ENCODE measurements at regions of chr17 and their contacts with region 1.

Region 1: DNA sequence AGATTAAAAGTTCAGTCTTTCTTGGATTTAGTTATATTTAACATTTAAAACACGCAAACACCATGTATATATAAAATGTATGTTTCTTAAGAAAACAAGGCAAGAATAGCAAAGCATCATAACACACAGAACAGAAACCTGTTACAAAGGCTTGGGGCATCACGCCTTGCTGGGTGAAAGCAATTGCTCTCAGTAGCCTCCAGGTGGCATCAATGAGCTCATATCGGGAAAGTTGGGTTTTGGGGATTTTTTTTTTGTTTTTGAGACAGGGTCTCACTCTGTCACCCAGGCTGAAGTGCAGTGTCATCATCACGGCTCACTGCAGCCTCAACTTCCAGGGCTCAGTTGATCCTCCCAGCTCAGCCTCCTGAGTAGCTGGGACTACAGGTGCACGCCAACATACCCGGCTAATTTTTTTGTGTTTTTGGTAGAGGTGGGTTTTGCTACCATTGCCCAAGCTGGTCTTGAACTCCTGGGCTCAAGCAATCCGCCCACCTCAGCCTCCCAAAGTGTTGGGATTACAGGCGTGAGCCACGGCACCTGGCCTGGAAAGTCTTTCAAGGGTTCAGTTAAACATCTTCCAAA is 56.9 kb downstream of the CYB5D2 start:
- DNase-seq: no peak
- ATAC-seq: peak in 1 of 4 donors; percentile 22
- H3K4me3 ChIP-seq: no peak overlapping the region
- H3K27ac ChIP-seq: no peak overlapping the region
- H3K4me1 ChIP-seq: peaks cover 0 to 14% (median 9%) of the 10 kb centered on the region in 12 donors
- H3K27me3 ChIP-seq: no peaks in the 10 kb centered on the region
- CTCF ChIP-seq: peak; percentile 54 to 74 (median 66)
- POLR2A ChIP-seq: no peak

Region 2: DNA sequence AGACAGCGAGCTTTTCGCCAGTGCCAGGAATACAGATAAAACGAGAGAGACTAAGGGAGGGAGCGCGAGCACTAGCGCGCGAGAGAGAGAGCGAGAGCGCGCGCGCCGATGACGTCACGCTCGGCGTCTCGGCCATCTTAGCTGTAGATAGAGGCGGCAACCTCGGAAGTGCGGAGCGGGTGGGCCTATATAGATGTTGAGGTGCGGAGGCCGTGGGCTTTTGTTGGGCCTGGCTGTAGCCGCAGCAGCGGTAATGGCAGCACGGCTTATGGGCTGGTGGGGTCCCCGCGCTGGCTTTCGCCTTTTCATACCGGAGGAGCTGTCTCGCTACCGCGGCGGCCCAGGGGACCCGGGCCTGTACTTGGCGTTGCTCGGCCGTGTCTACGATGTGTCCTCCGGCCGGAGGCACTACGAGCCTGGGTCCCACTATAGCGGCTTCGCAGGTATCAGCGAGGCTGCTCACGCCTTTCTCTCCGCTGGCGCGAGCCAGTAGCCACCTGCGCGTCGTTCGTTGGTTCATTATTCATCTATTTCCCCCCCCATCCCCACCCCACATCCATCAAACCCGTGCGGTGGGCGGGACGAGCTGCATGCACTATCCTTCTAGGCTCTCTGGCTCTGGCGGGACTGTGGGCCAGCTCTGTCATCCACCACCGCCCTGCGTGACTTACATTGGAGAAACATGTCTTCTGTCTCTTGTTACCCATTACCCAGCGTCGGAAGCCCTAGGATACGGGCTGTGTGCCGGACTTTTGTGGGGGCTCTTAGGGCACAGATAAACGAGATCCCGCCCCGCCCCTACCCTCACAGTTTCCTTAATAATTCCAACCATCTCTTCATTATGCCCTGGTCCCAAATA is 56.1 kb before region 1 on chr17:
- intact Hi-C with region 1: loop called in 1 of 10 experiments (anchors 10 kb)
- DNase-seq: peak; percentile 91 to 96 (median 93)
- ATAC-seq: peak; percentile 90 to 96 (median 94)
- H3K4me3 ChIP-seq: peak overlapping the region; percentile 66 to 95 (median 85)
- H3K27ac ChIP-seq: peak overlapping the region; percentile 96 to 100 (median 98)
- H3K4me1 ChIP-seq: peaks cover 0 to 42% (median 36%) of the 10 kb centered on the region in 12 donors
- H3K27me3 ChIP-seq: no peaks in the 10 kb centered on the region
- CTCF ChIP-seq: peak in 1 of 12 donors; percentile 12
- POLR2A ChIP-seq: peak in 1 of 2 donors; percentile 58

Region 3: DNA sequence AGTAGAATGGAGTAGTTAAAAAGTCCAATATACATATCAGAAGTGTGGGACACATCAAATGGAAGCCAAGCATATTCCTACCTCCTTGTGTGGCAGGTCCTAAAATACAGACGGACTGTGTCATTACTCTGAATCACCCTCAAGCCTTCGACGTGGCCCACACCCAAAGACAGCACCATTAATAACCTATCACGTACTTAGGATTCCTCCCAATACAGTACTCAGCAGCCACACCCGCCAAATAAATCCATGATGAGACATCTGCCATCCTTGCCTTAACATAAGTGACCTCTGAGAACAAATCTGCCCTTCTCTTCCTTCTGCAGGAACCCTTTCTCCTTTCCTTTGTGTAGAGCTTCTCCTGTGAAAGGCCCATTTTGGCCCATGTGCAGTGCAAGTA is 127.7 kb after region 1 on chr17:
- intact Hi-C with region 1: no loop called
- DNase-seq: peak in 1 of 5 donors; percentile 47
- ATAC-seq: peak in 3 of 4 donors; percentile 53 to 94 (median 88)
- H3K4me3 ChIP-seq: no peak overlapping the region
- H3K27ac ChIP-seq: peak overlapping the region in 3 of 12 donors; percentile 8 to 32 (median 23)
- H3K4me1 ChIP-seq: peaks cover 0 to 37% (median 19%) of the 10 kb centered on the region in 12 donors
- H3K27me3 ChIP-seq: no peaks in the 10 kb centered on the region
- CTCF ChIP-seq: no peak
- POLR2A ChIP-seq: no peak

Region 4: GRCh38 chr17:4412933-4413831 is 213.3 kb after region 1 on chr17:
- intact Hi-C with region 1: loop called in 3 of 10 experiments (anchors 5 kb)
- DNase-seq: peak; percentile 90 to 95 (median 92)
- ATAC-seq: peak; percentile 93 to 98 (median 98)
- H3K4me3 ChIP-seq: peak overlapping the region in 1 of 12 donors; percentile 23
- H3K27ac ChIP-seq: no peak overlapping the region
- H3K4me1 ChIP-seq: peaks cover 0 to 8% (median 0%) of the 10 kb centered on the region in 12 donors
- H3K27me3 ChIP-seq: no peaks in the 10 kb centered on the region
- CTCF ChIP-seq: peak; percentile 83 to 96 (median 88)
- POLR2A ChIP-seq: no peak

Measured in heart left ventricle (tissue), 16 donors.